HepG2 (cell line): ENCODE measurements at regions of chr19 and their contacts with region 1.

Region 1: GRCh38 chr19:10269333-10270179 is 1.4 kb upstream of the ICAM1 start:
- DNase-seq: peak; percentile 51
- ATAC-seq: peak; percentile 55
- H3K4me3 ChIP-seq: peak overlapping the region in 2 of 3 experiments; percentile 30 to 76; a peak in 3 of 6 replicates
- H3K27ac ChIP-seq: no peak overlapping the region
- H3K4me1 ChIP-seq: peaks cover 70% of the 10 kb centered on the region
- H3K27me3 ChIP-seq: no peaks in the 10 kb centered on the region
- CTCF ChIP-seq: peak; percentile 96
- EP300 ChIP-seq: no peak
- POLR2A ChIP-seq: no peak
- RAD21 ChIP-seq: peak; percentile 94

Region 2: DNA sequence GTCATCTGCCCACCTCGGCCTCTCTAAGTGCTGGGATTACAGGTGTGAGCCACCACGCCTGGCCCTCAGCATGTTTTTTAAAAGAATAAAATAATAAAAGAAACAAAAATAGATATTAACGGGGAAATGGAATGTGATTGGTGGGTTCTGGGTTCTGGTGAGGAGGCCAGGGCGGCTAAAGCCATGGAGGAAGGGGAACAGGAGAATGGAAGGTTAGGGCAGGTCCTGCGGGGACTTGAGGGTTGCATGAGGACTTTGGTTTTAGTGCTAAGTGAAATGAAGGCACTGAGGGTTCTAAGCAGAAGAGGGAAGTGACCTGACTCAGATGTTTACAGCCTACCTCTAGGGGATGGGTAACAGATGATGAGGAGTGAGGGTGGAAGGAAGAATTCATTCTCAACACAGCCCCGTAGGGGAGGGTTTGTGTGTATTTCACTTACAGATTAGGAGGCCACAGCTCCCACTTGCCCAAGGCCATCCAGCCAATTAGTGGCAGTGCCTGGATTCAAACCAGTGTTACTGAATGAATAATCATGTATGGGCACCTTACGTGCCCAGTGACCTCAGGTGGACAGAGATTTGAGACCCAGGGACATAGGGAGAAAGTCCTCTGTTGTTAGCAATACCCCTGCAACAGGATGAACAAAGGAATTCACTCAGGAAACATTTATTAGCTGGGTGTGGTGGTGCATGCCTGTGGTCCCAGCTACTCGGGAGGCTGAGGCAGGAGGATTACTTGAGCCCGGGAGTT is 24.2 kb before region 1 on chr19:
- CTCF ChIA-PET with region 1: no interaction called
- POLR2A ChIA-PET with region 1: no interaction called
- in situ Hi-C with region 1: no loop called
- intact Hi-C with region 1: no loop called
- DNase-seq: no peak
- ATAC-seq: no peak
- H3K4me3 ChIP-seq: no peak overlapping the region
- H3K27ac ChIP-seq: no peak overlapping the region
- H3K4me1 ChIP-seq: peaks cover 53% of the 10 kb centered on the region
- H3K27me3 ChIP-seq: no peaks in the 10 kb centered on the region
- CTCF ChIP-seq: no peak
- EP300 ChIP-seq: no peak
- POLR2A ChIP-seq: no peak
- RAD21 ChIP-seq: no peak

Region 3: DNA sequence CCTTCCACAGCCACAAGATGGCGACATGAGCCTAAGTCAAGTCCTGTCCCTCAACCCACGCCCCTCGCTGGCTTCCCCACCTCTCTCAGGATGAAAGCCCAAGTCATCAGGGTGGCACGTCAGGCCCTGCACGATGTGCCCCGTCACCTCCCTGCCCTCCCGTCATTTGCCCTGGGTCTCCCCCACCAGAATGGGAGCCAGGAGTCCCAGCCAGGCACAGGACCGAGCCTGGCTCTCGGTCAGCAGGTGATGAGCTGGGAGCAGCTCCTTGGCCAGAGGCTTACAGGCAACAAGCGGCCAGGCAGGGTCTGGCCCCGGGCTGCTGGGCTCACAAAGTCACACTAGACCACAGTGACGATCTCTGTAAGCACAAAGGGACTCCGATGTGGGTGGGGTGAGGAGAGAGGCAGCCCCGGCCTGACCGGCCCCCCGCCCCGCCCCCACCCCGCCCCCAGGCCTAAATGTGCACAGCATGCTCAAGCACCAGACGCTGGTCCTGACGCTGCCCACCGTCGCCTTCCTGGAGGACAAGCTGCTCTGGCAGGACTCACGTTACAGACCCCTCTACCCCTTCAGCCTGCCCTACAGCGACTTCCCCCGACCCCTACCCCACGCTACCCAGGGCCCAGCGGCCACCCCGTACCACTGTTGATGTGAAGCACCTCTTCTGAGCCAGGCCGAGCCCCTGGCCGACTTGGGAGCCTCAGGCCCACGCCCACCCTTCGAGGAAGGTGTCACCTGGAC is 10.2 kb before region 1 on chr19:
- CTCF ChIA-PET with region 1: no interaction called
- POLR2A ChIA-PET with region 1: interaction called, 71 read pairs
- in situ Hi-C with region 1: no loop called
- intact Hi-C with region 1: no loop called
- DNase-seq: peak; percentile 88
- ATAC-seq: peak; percentile 71
- H3K4me3 ChIP-seq: no peak overlapping the region
- H3K27ac ChIP-seq: no peak overlapping the region
- H3K4me1 ChIP-seq: peaks cover 51% of the 10 kb centered on the region
- H3K27me3 ChIP-seq: no peaks in the 10 kb centered on the region
- CTCF ChIP-seq: peak; percentile 82
- EP300 ChIP-seq: no peak
- POLR2A ChIP-seq: no peak
- RAD21 ChIP-seq: peak; percentile 63

Region 4: DNA sequence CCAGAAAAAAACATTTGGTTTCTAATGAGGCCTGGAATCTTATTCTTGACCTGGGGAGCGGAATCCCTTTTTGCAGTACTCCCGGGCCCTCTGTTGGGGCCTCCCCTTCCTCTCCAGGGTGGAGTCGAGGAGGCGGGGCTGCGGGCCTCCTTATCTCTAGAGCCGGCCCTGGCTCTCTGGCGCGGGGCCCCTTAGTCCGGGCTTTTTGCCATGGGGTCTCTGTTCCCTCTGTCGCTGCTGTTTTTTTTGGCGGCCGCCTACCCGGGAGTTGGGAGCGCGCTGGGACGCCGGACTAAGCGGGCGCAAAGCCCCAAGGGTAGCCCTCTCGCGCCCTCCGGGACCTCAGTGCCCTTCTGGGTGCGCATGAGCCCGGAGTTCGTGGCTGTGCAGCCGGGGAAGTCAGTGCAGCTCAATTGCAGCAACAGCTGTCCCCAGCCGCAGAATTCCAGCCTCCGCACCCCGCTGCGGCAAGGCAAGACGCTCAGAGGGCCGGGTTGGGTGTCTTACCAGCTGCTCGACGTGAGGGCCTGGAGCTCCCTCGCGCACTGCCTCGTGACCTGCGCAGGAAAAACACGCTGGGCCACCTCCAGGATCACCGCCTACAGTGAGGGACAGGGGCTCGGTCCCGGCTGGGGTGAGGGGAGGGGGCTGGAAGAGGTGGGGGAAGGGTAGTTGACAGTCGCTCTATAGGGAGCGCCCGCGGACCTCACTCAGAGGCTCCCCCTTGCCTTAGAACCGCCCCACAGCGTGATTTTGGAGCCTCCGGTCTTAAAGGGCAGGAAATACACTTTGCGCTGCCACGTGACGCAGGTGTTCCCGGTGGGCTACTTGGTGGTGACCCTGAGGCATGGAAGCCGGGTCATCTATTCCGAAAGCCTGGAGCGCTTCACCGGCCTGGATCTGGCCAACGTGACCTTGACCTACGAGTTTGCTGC is 17.5 kb after region 1 on chr19 and contains the start of gene ICAM4:
- CTCF ChIA-PET with region 1: no interaction called
- POLR2A ChIA-PET with region 1: interaction called, 149 read pairs
- in situ Hi-C with region 1: no loop called
- intact Hi-C with region 1: loop called (anchors 2 kb)
- DNase-seq: peak; percentile 63
- ATAC-seq: peak; percentile 41
- H3K4me3 ChIP-seq: peak within 1 kb of the TSS; percentile 33 to 70 (median 41); a peak in 5 of 6 replicates
- H3K27ac ChIP-seq: peak within 1 kb of the TSS; percentile 30
- H3K4me1 ChIP-seq: peaks cover 68% of the 10 kb centered on the region
- H3K27me3 ChIP-seq: peaks cover 0 to 20% of the 10 kb centered on the region in 2 experiments; a peak in 3 of 5 replicates
- CTCF ChIP-seq: no peak
- EP300 ChIP-seq: peak in 1 of 2 experiments; percentile 8; a peak in 1 of 4 replicates
- POLR2A ChIP-seq: peak in 1 of 2 experiments; percentile 15; a peak in 1 of 4 replicates
- RAD21 ChIP-seq: no peak
- total RNA-seq, gene ICAM4: 1.5 and 2.9 TPM in 2 replicates

Region 5: GRCh38 chr19:10332955-10333757 is 63.6 kb after region 1 on chr19 and contains the start of gene RAVER1:
- CTCF ChIA-PET with region 1: no interaction called
- POLR2A ChIA-PET with region 1: interaction called, 79 read pairs
- in situ Hi-C with region 1: no loop called
- intact Hi-C with region 1: loop called (anchors 2 kb)
- DNase-seq: peak; percentile 91
- ATAC-seq: peak; percentile 70
- H3K4me3 ChIP-seq: peak within 1 kb of the TSS; percentile 77 to 89 (median 86)
- H3K27ac ChIP-seq: peak within 1 kb of the TSS; percentile 95
- H3K4me1 ChIP-seq: peaks cover 37% of the 10 kb centered on the region
- H3K27me3 ChIP-seq: no peaks in the 10 kb centered on the region; a peak in 1 of 5 replicates
- CTCF ChIP-seq: no peak
- EP300 ChIP-seq: no peak; a peak in 1 of 4 replicates
- POLR2A ChIP-seq: peak; percentile 75 to 92
- RAD21 ChIP-seq: peak; percentile 42
- total RNA-seq, gene RAVER1: 7.9 and 17.7 TPM in 2 replicates

Region 6: GRCh38 chr19:10388957-10389356 is 119.4 kb after region 1 on chr19:
- CTCF ChIA-PET with region 1: interaction called, 47 read pairs
- POLR2A ChIA-PET with region 1: interaction called, 42 read pairs
- in situ Hi-C with region 1: loop called (anchors 5 kb)
- intact Hi-C with region 1: loop called (anchors 2 kb)
- DNase-seq: peak; percentile 80
- ATAC-seq: peak; percentile 63
- H3K4me3 ChIP-seq: no peak overlapping the region
- H3K27ac ChIP-seq: no peak overlapping the region
- H3K4me1 ChIP-seq: peaks cover 20% of the 10 kb centered on the region
- H3K27me3 ChIP-seq: no peaks in the 10 kb centered on the region
- CTCF ChIP-seq: peak; percentile 90
- EP300 ChIP-seq: no peak
- POLR2A ChIP-seq: 0 out of 4 replicates have a peak, but pooled peaks of 1 of the 2 experiments have one; percentile 23
- RAD21 ChIP-seq: peak; percentile 70